Activated CD4-positive, alpha-beta memory T cell treated with anti-CD3 and anti-CD28 coated beads for 36 hours (primary cell): ENCODE measurements at regions of chr6 and their contacts with region 1.

Region 1: DNA sequence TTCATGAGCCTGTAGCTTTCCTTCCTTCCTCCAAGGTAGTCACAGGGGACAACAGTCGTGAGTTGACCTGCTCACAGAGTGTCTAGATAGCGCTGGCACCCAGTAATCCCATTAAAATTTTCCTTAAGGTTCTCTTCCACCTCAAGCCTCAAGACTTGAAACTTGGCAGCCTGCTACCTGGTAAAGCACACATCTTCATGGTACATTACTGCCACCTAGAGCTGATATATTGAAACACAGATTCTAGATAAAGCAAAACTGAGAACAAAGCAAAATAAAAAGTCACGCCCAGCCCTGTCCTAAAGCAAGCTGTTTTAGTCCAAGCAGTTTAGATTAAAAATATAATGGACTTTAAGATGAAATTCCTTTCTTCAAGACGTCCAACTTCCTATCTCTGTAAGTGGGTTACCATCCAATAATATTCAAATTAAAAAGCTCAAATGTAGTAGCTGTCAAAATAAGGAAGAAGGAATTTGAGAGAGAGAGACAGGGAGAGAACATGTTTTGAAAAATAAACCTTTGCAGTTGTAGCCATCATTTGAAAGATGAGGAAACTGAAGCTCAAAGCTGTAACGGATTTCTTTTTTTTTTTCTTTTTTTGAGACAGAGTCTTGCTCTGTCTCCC is 50.7 kb upstream of the CD83 start:
- DNase-seq: no peak
- H3K4me3 Mint-ChIP-seq: no peak overlapping the region
- H3K27ac Mint-ChIP-seq: no peak overlapping the region
- H3K4me1 Mint-ChIP-seq: peaks cover 13% of the 10 kb centered on the region
- H3K27me3 Mint-ChIP-seq: peaks cover 6% of the 10 kb centered on the region

Region 2: GRCh38 chr6:13336553-13336952 is 730.3 kb before region 1 on chr6:
- CTCF ChIA-PET with region 1: interaction called, 6 read pairs
- POLR2A ChIA-PET with region 1: no interaction called
- intact Hi-C with region 1: loop called (anchors 10 kb)
- DNase-seq: peak; percentile 79
- H3K4me3 Mint-ChIP-seq: no peak overlapping the region
- H3K27ac Mint-ChIP-seq: no peak overlapping the region
- H3K4me1 Mint-ChIP-seq: peaks cover 6% of the 10 kb centered on the region
- H3K27me3 Mint-ChIP-seq: no peaks in the 10 kb centered on the region

Region 3: GRCh38 chr6:13838616-13839015 is 228.3 kb before region 1 on chr6:
- CTCF ChIA-PET with region 1: no interaction called
- POLR2A ChIA-PET with region 1: no interaction called
- intact Hi-C with region 1: no loop called
- DNase-seq: no peak
- H3K4me3 Mint-ChIP-seq: no peak overlapping the region
- H3K27ac Mint-ChIP-seq: no peak overlapping the region
- H3K4me1 Mint-ChIP-seq: peaks cover 7% of the 10 kb centered on the region
- H3K27me3 Mint-ChIP-seq: peaks cover 2% of the 10 kb centered on the region

Region 4: DNA sequence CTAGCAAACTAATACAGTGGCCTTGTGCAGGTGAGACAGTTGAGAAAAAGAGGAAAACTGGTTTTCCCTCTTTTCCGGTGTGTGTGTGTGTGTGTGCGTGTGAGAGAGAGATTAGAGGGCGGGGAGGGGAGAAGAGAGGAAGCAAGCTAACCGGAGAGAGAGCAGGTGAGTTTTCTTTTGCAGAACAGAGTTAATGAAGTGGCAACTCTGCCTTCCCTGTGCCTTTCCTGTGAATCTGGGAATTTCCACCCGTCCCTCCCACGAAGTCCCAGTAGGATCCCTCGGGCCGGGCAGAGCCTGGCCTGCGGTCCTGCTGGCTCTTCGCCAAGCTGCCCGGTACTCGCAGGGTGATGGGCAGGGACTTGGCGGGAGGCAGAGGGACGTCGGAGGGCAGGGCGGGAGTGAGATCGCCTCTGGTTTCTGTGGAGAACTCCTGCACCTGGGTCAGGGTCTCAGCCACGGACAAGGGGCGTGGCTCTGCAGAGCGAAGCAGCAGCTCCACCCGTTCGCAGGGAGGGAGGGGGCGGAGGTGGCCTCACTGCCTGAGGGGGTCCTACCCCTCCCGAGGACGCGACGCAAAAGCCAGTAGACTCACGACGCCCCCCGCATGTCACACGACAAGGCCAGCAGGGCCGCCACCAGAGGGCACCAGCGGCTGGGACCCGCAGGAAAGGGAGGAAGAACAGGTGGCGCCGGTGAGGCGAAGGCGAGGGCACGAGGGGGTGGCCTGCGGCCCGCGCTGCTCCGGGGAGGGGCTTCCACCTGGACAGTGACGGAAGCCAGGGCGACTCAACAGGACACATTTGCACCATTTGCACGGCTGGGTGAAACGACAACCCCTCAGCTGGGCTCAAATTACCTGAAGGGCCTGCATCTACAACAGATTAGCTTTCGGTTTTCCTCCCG is 193.4 kb before region 1 on chr6:
- CTCF ChIA-PET with region 1: interaction called, 42 read pairs
- POLR2A ChIA-PET with region 1: no interaction called
- intact Hi-C with region 1: no loop called
- DNase-seq: peak; percentile 82
- H3K4me3 Mint-ChIP-seq: peak overlapping the region; percentile 49
- H3K27ac Mint-ChIP-seq: no peak overlapping the region
- H3K4me1 Mint-ChIP-seq: peaks cover 12% of the 10 kb centered on the region
- H3K27me3 Mint-ChIP-seq: peaks cover 14% of the 10 kb centered on the region

Region 5: DNA sequence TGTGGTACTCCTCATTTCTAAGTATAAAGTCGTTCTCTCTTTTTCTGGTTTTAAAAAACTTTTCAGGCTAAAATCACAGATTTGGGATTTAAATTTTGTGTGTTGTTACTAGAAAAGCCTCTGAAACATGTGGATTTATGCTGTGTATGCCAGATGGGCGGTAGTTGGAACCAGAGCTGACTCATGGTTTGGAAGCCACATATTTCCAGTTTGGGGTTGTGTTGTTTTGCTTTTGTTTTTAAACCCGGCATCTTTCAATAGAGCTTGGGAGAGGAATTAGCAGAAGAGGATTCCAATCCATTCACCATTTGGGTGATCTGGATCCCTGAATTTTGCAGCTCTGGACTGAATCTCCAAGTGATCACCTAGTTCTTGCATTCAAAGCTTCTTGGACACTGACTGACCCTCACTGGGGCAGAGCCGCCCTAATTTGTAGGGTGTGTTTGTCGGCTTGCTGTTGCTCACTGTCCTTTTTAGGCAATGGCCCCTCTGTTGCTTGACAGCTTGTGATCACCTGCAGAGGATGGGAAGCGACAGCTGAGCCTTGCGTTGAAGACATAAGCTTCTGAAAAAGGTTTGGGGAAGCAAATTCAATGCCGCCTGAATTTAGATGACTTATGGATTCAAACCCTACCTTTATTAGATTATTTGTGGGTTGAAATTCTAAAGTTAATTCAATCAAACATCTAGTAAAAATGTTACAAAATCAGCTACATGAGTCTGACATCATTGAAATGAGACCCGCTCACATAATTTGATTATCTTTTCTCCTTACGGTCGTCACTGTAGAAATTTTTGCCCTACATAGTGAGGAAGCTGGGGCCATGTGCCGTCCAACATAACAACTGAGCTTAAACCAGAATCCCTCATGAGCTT is 29.3 kb before region 1 on chr6:
- CTCF ChIA-PET with region 1: interaction called, 73 read pairs
- POLR2A ChIA-PET with region 1: no interaction called
- intact Hi-C with region 1: no loop called
- DNase-seq: peak; percentile 25
- H3K4me3 Mint-ChIP-seq: no peak overlapping the region
- H3K27ac Mint-ChIP-seq: no peak overlapping the region
- H3K4me1 Mint-ChIP-seq: peaks cover 9% of the 10 kb centered on the region
- H3K27me3 Mint-ChIP-seq: peaks cover 27% of the 10 kb centered on the region

Region 6: DNA sequence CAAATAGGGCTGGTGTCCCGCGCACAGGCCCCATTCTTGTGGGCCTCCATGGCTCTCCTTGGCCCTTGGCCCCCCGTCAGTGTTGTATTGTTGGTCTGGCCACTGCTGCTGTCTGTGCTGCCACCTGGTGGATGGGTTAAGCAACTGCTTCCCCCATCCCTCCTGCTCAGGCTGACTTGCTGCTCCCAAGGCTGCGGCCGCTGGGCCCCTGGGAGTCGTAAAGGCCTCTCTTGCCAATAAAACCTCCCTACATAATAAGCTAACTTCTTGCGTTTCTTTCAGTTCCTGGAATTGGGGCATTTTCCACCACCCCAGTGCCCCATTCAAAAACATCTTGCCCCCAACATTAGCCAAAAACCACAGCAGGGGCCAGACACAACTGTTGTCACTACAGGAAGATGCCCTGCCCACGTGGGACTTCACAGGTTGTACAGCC is 77.8 kb after region 1 on chr6:
- CTCF ChIA-PET with region 1: interaction called, 24 read pairs
- POLR2A ChIA-PET with region 1: no interaction called
- intact Hi-C with region 1: loop called (anchors 5 kb)
- DNase-seq: peak; percentile 81
- H3K4me3 Mint-ChIP-seq: no peak overlapping the region
- H3K27ac Mint-ChIP-seq: no peak overlapping the region
- H3K4me1 Mint-ChIP-seq: no peaks in the 10 kb centered on the region
- H3K27me3 Mint-ChIP-seq: no peaks in the 10 kb centered on the region